HepG2 (cell line): ENCODE measurements at regions of chr1 and their contacts with region 1.

Region 1: DNA sequence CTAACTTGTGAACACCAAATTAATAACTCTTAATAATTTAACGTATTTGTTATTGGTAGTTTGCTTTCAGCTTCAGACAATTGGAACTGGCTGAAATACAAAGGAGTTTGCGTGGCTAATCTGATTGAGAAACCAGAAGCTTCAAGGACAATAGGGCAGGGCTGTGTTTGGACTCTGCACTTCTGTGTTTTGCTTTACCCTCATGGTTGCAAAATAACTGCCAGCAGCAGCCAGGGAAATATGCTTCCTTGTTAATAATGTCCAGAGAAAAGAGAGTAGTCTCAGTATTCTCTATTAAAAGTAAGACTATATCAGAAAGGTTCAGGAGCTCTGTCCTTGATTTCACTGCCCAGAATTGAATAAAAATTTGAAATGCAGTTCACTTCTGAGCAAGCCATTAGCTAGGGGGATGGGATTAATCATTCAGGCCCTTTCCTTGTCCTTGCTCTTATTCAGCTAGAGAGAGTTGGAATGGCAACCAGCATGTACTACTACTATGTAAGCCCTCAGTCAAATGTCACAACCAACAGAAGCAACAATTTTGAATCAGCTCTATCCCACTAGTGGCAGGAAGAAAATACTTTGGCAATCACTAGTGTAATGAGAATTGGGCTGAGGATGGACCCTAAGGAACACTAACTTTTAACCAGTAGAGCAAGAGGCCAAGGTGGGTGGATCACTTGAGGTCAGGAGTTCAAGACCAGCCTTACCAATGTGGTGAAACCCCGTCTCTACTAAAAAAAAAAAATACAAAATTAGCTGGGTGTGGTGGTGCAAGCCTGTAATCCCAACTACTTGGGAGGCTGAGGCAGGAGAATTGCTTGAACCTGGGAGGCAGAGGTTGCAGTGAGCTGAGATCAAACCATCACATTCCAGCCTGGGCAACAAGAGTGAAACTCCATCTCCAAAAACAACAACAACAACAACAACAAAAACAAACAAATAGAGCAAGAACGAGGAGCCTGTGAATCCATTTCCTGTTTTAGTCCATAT is 76.8 kb downstream of the POU2F1 start:
- DNase-seq: peak; percentile 91
- ATAC-seq: peak; percentile 95
- H3K4me3 ChIP-seq: peak overlapping the region; percentile 15 to 42 (median 33); a peak in 3 of 6 replicates
- H3K27ac ChIP-seq: peak overlapping the region; percentile 97
- H3K4me1 ChIP-seq: peaks cover 53% of the 10 kb centered on the region
- H3K27me3 ChIP-seq: no peaks in the 10 kb centered on the region
- CTCF ChIP-seq: no peak
- EP300 ChIP-seq: peak; percentile 74 to 89; a peak in 3 of 4 replicates
- POLR2A ChIP-seq: 0 out of 4 replicates have a peak, but pooled peaks of 1 of the 2 experiments have one; percentile 20
- RAD21 ChIP-seq: no peak

Region 2: DNA sequence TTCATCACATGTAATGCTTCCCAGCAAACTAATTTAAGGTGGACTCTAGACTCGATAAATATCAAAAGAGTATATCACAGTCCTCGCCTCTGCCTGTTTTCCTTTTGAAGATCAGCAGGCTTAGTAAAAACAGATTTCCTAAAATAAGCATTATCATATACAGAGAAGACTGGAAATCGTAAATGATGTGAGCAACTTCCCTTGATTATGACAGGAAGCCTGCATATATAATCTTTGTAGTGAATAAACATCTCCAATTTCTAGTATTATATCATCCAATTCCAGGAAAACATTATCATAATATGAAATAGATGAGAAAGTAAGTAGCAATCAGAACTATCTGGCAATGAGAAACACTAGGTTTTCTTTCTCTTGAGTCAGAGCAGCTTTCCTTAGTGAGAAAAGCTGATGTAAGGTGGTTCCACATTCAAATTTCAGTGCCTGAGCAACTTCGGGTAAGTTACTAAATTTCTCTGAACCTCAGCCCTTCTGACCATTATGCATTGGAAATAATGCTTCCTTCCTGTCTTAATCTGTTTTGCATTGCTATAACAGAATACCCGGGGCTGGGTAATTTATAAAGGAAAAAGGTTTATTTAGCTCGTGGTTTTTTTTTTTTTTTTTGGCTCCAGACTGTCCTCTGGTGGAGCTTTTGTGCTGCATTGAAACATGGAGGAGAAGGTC is 89.4 kb before region 1 on chr1:
- CTCF ChIA-PET with region 1: no interaction called
- POLR2A ChIA-PET with region 1: no interaction called
- in situ Hi-C with region 1: no loop called
- intact Hi-C with region 1: no loop called
- DNase-seq: no peak
- ATAC-seq: no peak
- H3K4me3 ChIP-seq: no peak overlapping the region; a peak in 1 of 6 replicates
- H3K27ac ChIP-seq: no peak overlapping the region
- H3K4me1 ChIP-seq: no peaks in the 10 kb centered on the region
- H3K27me3 ChIP-seq: no peaks in the 10 kb centered on the region; a peak in 1 of 5 replicates
- CTCF ChIP-seq: no peak
- EP300 ChIP-seq: no peak
- POLR2A ChIP-seq: no peak
- RAD21 ChIP-seq: no peak

Region 3: DNA sequence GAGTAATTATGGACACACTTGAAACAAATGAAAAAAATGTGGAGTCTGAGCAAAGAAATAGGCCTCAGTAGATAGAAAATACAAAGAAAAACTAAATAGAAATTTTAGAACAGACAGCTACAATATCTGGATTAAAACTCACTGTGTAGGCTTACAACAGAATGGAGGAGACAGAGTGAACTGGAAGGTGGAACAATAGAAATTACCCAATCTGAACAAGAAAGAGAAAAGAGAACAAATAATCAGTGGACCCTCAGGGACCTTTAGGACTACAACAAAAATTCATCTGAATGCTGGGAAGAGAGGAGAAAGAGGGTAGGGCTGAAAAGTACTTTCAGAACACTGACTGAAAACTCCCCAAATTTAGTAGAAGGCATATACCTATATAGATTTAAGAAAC is 13.2 kb after region 1 on chr1:
- CTCF ChIA-PET with region 1: no interaction called
- POLR2A ChIA-PET with region 1: no interaction called
- in situ Hi-C with region 1: no loop called
- intact Hi-C with region 1: loop called (anchors 2 kb)
- DNase-seq: no peak
- ATAC-seq: no peak
- H3K4me3 ChIP-seq: no peak overlapping the region
- H3K27ac ChIP-seq: no peak overlapping the region
- H3K4me1 ChIP-seq: peaks cover 20% of the 10 kb centered on the region
- H3K27me3 ChIP-seq: no peaks in the 10 kb centered on the region
- CTCF ChIP-seq: no peak
- EP300 ChIP-seq: no peak
- POLR2A ChIP-seq: no peak
- RAD21 ChIP-seq: no peak